ENCODE measurements at regions of chr15 and their contacts with region 1.

Region 1: GRCh38 chr15:49706805-49707204 is 86.0 kb downstream of the DTWD1 start:
- DNase-seq: no peak
- H3K4me3 Mint-ChIP-seq: no peak overlapping the region
- H3K27ac Mint-ChIP-seq: no peak overlapping the region
- H3K4me1 Mint-ChIP-seq: no peaks in the 10 kb centered on the region
- H3K27me3 Mint-ChIP-seq: peaks cover 2% of the 10 kb centered on the region

Region 2: GRCh38 chr15:49675041-49675440 is 31.8 kb before region 1 on chr15:
- intact Hi-C with region 1: loop called (anchors 1 kb)
- DNase-seq: no peak
- H3K4me3 Mint-ChIP-seq: no peak overlapping the region
- H3K27ac Mint-ChIP-seq: no peak overlapping the region
- H3K4me1 Mint-ChIP-seq: no peaks in the 10 kb centered on the region
- H3K27me3 Mint-ChIP-seq: peaks cover 20% of the 10 kb centered on the region

Region 3: GRCh38 chr15:49801796-49802195 is 95.0 kb after region 1 on chr15:
- intact Hi-C with region 1: no loop called
- DNase-seq: no peak
- H3K4me3 Mint-ChIP-seq: no peak overlapping the region
- H3K27ac Mint-ChIP-seq: no peak overlapping the region
- H3K4me1 Mint-ChIP-seq: no peaks in the 10 kb centered on the region
- H3K27me3 Mint-ChIP-seq: no peaks in the 10 kb centered on the region

Measured in activated T-helper 1 cell treated with anti-CD3 and anti-CD28 coated beads, Interleukin-12 subunit alpha, Interleukin-12 subunit beta, Interleukin-2, Interleukin-4 antibody, amounts not matched to agents 30 ng/mL and 10 ng/mL and 1 ng/mL, durations not matched to agents 14 hours and 24 hours and 36 hours (primary cell).